Head of caudate nucleus (tissue), 42 donors: ENCODE measurements at regions of chr18 and their contacts with region 1.

Region 1: DNA sequence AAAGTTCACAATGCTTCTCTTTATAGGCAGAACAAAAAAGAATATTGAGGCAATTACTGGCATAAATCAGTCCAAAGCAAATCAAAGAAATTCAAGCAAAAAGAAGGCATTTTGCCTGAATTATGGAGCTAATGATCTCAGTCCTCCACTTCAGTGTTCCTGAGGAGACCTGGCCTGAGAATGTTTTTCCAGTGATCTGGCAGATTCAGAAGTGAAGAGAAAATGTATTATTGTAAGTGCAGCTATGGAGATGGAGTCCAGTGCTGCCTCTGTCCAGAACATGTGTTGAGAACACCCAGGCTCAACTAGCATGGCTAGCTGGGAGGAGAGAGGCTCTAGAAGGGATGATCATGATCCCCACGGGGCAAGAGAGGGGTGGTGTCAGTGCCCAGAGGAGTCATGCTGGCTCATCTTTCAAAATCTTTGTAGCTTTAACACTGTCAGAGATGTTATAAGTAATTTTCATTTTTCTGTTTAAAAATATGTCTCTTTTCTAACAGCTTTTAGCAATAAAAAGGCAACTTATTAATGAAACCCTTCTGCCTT is 367.0 kb upstream of the RAB12 start:
- DNase-seq: no peak

Region 2: GRCh38 chr18:8188184-8188583 is 54.0 kb before region 1 on chr18:
- intact Hi-C with region 1: loop called (anchors 10 kb)
- DNase-seq: no peak

Region 3: GRCh38 chr18:8367217-8367988 is 125.2 kb after region 1 on chr18:
- intact Hi-C with region 1: no loop called
- DNase-seq: peak in 41 of 42 donors; percentile 28 to 82 (median 63)

Region 4: DNA sequence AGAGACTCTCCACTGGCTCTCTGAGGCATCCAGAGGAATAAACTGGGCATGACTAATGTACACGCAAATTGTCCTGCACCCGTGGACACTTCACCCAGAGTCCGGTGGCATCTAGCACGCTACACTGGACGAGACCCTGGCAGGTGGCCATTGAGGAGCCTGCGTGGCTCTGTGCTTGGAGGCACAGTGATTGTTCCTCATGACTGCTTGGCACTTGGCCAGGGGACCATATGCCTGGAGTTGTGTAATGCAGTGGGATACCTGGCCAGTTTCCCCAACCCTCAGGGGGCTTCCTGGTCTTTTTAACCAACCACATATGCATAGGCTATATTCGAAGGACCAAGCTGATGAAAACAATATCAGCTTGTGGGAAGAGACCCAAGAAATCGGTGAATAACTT is 529.7 kb after region 1 on chr18:
- intact Hi-C with region 1: no loop called
- DNase-seq: peak in 14 of 42 donors; percentile 13 to 65 (median 42)